ENCODE measurements at regions of chr12 and their contacts with region 1.

Region 1: GRCh38 chr12:75505706-75506312 is 5.6 kb downstream of the KRR1 start:
- DNase-seq: no peak
- H3K4me3 Mint-ChIP-seq: no peak overlapping the region
- H3K27ac Mint-ChIP-seq: no peak overlapping the region
- H3K4me1 Mint-ChIP-seq: peaks cover 48% of the 10 kb centered on the region
- H3K27me3 Mint-ChIP-seq: no peaks in the 10 kb centered on the region

Region 2: GRCh38 chr12:75437564-75437963 is 68.2 kb before region 1 on chr12:
- intact Hi-C with region 1: loop called (anchors 2 kb)
- DNase-seq: no peak
- H3K4me3 Mint-ChIP-seq: no peak overlapping the region
- H3K27ac Mint-ChIP-seq: no peak overlapping the region
- H3K4me1 Mint-ChIP-seq: peaks cover 10% of the 10 kb centered on the region
- H3K27me3 Mint-ChIP-seq: peaks cover 2% of the 10 kb centered on the region

Measured in activated T-helper 1 cell treated with anti-CD3 and anti-CD28 coated beads, Interleukin-12 subunit alpha, Interleukin-12 subunit beta, Interleukin-2, Interleukin-4 antibody, amounts not matched to agents 30 ng/mL and 10 ng/mL and 1 ng/mL, durations not matched to agents 14 hours and 24 hours and 36 hours (primary cell).